ENCODE measurements at regions of chr7 and their contacts with region 1.

Region 1: GRCh38 chr7:134126966-134127848 is at the start of gene LRGUK:
- DNase-seq: peak; percentile 92
- total RNA-seq, gene LRGUK: 0.24 TPM

Region 2: GRCh38 chr7:133081599-133082389 is 1045.4 kb before region 1 on chr7 and contains the start of gene CHCHD3:
- intact Hi-C with region 1: loop called (anchors 10 kb)
- DNase-seq: peak; percentile 99
- total RNA-seq, gene CHCHD3: 138 TPM

Region 3: DNA sequence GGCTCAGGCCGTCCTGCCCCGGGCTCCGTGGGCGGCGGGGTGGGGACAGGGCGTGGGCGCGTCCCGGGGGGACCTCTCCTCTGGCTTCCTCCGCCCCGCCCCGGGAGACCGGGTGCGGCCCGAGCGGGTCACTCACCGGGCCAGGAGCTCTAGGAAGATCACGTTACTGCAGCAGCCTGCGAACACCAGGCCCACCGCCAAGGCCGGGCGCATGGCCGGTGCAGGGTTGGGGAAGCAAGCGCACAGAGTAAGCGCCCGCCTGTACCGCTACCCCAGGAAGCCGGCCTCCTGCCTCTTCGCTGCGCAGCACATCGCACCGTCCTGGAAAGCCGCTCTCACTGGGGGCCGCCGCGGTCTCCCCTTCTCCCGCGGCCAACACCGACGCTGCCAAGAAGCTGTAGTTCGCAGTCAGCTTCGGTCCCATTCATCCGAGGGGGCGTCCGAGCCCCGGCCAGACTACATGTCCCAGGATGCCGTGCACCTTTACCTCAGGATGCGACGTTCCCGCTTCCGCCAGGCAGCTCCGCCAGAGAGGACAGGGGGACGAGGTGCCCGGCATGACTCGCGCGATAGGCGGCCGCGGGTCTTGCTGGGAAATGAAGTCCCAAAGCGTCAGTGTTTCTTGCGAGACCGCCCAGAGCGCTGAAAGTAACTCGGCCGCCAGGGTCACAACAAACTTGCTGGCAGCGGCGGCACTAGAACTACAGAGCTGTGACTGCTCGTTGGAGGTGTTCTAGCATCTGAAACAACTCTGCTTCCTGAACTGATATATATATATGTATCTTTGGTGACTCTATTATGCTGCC is 189.5 kb after region 1 on chr7 and contains the start of gene SLC35B4:
- intact Hi-C with region 1: loop called (anchors 5 kb)
- DNase-seq: peak; percentile 98
- total RNA-seq, gene SLC35B4: 6.5 TPM

Region 4: DNA sequence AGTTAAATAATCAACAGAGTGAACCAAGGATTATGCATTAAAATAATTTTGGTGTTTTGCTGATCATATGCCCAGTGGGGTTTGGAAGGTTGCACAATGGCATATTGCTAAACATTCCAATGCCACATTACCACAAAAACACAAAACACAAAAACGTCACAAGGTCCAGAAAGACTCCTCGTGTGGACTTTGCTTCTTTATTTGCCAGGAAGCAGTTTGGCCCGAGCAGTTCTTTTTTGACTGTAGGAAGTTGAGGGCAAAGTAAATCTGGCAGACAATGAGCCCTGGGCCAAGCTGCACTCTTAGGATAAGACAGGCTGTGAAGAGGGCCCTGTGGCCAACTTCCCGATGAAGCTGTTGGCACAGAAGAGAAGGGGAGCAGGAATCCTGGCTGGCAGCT is 228.7 kb after region 1 on chr7:
- intact Hi-C with region 1: no loop called
- DNase-seq: no peak